AG04449 (cell line): ENCODE measurements at regions of chr7 and their contacts with region 1.

Region 1: GRCh38 chr7:24819916-24820689 is 62.8 kb upstream of the GSDME start:
- DNase-seq: no peak
- H3K4me3 ChIP-seq: no peak overlapping the region
- CTCF ChIP-seq: peak; percentile 84

Region 2: DNA sequence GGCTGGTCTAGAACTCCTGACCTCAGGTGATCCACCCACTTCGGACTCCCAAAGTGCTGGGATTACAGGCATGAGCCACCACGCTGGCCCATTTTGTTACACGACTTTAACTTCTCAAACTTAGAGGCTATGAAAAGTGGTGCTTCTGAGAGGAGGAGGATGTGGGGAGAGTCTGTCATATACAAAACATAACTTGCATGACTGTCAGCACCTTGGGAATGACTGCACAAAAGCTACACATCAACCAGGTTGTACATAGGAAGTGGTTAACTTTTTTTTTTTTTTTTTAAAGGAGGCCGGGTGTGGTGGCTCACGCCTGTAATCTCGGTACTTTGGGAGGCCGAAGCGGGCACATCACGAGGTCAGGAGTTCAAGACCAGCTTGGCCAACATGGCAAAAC is 19.4 kb before region 1 on chr7:
- CTCF ChIA-PET with region 1: interaction called, 10 read pairs
- POLR2A ChIA-PET with region 1: no interaction called
- DNase-seq: no peak
- H3K4me3 ChIP-seq: no peak overlapping the region
- CTCF ChIP-seq: no peak

Region 3: GRCh38 chr7:24877790-24878311 is 57.7 kb after region 1 on chr7:
- CTCF ChIA-PET with region 1: interaction called, 21 read pairs
- POLR2A ChIA-PET with region 1: no interaction called
- DNase-seq: no peak
- H3K4me3 ChIP-seq: no peak overlapping the region
- CTCF ChIP-seq: no peak

Region 4: GRCh38 chr7:24979863-24980533 is 159.9 kb after region 1 on chr7 and contains the start of gene OSBPL3:
- CTCF ChIA-PET with region 1: interaction called, 34 read pairs
- POLR2A ChIA-PET with region 1: interaction called, 6 read pairs
- DNase-seq: peak; percentile 66
- H3K4me3 ChIP-seq: peak within 1 kb of the TSS; percentile 76
- CTCF ChIP-seq: no peak

Region 5: DNA sequence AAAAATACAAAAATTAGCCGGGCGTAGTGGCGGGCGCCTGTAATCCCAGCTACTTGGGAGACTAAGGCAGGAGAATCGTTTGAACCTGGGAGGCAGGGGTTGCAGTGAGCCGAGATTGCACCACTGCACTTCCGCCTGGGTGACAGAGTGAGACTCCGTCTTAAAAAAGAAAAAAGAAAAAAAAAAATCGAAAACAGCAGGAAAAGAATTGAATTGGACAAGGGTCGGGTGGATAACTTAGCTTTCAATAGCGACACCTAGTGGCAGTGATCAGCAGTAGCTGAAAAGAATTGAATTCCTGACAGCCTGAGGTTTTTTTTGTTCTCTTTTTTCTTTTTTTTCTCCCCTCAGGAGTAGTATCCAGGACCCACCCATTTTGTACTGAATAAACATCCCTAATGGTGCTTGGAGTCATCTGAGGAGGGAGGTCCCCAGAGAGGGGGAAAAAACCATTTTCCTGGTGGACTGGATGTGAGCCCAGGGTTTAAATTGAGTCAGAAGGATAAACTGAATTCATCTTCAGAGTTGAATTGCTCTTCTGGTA is 249.9 kb after region 1 on chr7:
- CTCF ChIA-PET with region 1: interaction called, 129 read pairs
- POLR2A ChIA-PET with region 1: interaction called, 9 read pairs
- DNase-seq: no peak
- H3K4me3 ChIP-seq: no peak overlapping the region
- CTCF ChIP-seq: peak; percentile 63